ENCODE measurements at regions of chr1 and their contacts with region 1.

Region 1: GRCh38 chr1:235855811-235856429 is 10.8 kb downstream of the LYST start:
- DNase-seq: no peak
- H3K4me3 Mint-ChIP-seq: no peak overlapping the region
- H3K27ac Mint-ChIP-seq: peak overlapping the region; percentile 37
- H3K4me1 Mint-ChIP-seq: peaks cover 41% of the 10 kb centered on the region
- H3K27me3 Mint-ChIP-seq: no peaks in the 10 kb centered on the region

Region 2: GRCh38 chr1:234893725-234894630 is 961.9 kb before region 1 on chr1:
- intact Hi-C with region 1: no loop called
- DNase-seq: no peak
- H3K4me3 Mint-ChIP-seq: peak overlapping the region; percentile 33
- H3K27ac Mint-ChIP-seq: peak overlapping the region; percentile 75
- H3K4me1 Mint-ChIP-seq: peaks cover 60% of the 10 kb centered on the region
- H3K27me3 Mint-ChIP-seq: peaks cover 2% of the 10 kb centered on the region

Region 3: DNA sequence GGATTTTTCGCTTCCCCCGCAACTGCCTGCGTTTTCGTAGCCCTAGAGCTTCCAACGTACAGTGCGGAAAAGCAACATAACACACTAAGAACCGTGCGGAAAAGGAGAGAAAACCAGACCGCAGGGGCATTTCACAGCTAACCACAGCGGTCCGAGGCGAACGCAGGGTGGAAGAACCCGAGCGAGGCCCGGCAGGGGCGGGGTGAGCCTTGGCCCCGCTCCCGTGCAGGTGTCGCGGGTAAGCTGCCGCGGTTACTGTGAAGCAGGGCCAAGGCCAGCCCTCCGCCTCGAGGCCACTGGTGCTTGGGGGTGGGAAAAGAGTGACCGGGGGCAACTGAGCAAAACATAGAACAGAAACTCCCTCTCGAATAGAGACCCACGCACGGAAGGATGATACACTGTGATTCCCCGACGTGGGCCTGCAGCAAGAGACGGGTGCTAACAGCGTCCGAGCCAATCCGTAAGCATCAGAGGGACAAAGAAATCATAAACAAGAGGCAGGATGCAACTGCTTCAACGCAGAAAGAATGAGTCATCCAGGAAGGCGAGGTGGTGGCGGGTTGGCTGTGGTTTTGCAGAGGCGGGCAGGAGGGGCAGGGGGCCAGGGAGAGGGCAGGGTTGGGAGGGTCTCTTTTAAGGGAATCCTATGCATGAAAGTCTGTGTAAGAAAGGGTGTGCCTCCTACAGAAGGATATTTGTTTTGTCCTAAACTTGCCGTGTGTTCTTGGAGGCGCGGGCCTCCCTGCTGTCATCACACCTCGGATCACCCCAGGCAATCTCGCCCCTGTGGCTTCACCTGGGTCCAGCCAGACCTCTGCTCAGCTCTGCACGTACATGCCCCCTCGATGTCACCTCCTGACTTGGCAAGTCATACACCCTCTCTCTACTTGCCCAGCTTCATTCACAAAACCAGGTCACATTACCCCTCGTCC is 213.6 kb before region 1 on chr1:
- intact Hi-C with region 1: loop called (anchors 2 kb)
- DNase-seq: peak; percentile 76
- H3K4me3 Mint-ChIP-seq: peak overlapping the region; percentile 67
- H3K27ac Mint-ChIP-seq: peak overlapping the region; percentile 92
- H3K4me1 Mint-ChIP-seq: peaks cover 71% of the 10 kb centered on the region
- H3K27me3 Mint-ChIP-seq: peaks cover 17% of the 10 kb centered on the region

Region 4: GRCh38 chr1:235843461-235843961 is 12.4 kb before region 1 on chr1:
- intact Hi-C with region 1: loop called (anchors 1 kb)
- DNase-seq: no peak
- H3K4me3 Mint-ChIP-seq: no peak overlapping the region
- H3K27ac Mint-ChIP-seq: no peak overlapping the region
- H3K4me1 Mint-ChIP-seq: peaks cover 43% of the 10 kb centered on the region
- H3K27me3 Mint-ChIP-seq: no peaks in the 10 kb centered on the region

Region 5: DNA sequence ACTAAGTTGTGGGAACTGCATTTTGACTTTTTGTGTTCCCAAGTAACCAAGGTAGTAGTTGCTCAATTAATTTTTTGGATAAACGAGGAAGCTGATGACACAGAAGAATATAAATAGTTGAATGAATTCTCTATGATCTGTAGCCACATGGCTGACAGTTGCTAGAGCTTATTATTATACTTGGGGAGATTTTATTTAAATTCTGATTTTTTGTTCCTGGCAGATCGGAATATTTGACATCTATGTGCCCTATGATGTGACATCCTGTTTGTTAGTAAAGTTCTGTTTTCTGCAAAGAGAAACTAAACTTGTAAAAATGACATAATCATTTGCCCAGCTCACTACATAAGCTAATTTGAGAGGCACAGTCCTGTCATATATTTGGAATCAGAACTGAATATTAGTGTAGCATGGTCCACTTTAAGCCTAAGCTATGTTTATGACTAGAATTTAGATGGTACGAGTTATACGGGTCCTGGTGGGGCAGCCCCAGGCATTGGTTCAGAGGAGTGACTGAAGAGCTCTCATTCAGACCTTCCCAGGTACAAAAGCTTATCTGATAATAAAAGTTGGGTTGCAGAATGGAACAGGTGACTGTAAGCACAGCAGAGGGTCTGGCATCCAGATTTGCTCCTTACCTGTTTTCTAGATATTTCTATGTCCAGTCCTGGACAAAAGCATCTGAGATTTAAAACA is 20.6 kb after region 1 on chr1:
- intact Hi-C with region 1: loop called (anchors 1 kb)
- DNase-seq: no peak
- H3K4me3 Mint-ChIP-seq: peak overlapping the region; percentile 69
- H3K27ac Mint-ChIP-seq: peak overlapping the region; percentile 98
- H3K4me1 Mint-ChIP-seq: peaks cover 88% of the 10 kb centered on the region
- H3K27me3 Mint-ChIP-seq: no peaks in the 10 kb centered on the region

Measured in activated T-helper 1 cell treated with anti-CD3 and anti-CD28 coated beads, Interleukin-12 subunit alpha, Interleukin-12 subunit beta, Interleukin-2, Interleukin-4 antibody, amounts not matched to agents 30 ng/mL and 10 ng/mL and 1 ng/mL, durations not matched to agents 14 hours and 24 hours and 36 hours (primary cell).